Aorta (tissue), 5 donors: ENCODE measurements at regions of chr9 and their contacts with region 1.

Region 1: DNA sequence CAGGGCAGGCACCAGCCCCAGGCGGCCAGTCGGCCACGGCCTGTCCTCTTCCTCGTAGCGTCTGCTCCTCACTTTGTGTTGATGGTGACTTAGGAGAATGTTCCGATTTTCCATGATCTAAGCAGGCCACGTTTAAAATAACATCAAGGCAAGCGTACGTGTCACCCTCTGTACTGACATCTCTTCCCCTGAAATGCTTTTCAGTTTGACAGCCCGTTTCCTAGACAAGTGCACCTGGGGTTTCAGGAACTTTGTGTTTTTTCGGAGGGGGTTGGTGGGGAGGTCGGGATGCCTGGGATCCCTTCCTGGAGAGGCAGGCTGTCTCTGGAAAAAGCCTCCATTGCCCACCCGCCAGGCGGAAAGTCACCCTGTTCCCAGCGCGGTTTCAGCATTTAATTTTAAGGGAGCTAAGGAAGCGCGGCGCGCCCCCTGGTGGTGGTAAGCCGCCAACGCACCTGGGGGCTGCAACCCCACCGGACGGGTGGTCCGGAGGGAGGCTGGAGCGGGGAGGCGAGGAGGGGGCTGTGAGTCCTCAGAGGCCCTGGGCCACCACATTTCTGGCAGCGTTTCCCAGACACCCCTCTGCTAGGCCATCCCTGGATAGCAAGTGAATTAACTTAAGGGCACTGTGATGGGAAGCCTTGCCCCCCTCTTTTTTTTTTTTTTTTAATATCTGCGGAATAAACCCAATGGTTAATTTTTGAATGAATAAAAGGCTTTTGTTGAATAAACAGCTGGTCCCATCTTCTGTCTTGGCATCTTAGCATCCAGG is 29.5 kb upstream of the HMCN2 start:
- DNase-seq: peak; percentile 73 to 93
- ATAC-seq: peak; percentile 86
- H3K4me3 ChIP-seq: no peak overlapping the region
- H3K27ac ChIP-seq: no peak overlapping the region
- H3K4me1 ChIP-seq: no peaks in the 10 kb centered on the region
- H3K27me3 ChIP-seq: no peaks in the 10 kb centered on the region

Region 2: GRCh38 chr9:130107234-130107861 is 128.7 kb before region 1 on chr9:
- intact Hi-C with region 1: loop called (anchors 1 to 2 kb)
- DNase-seq: peak; percentile 88 to 94
- ATAC-seq: peak; percentile 81
- H3K4me3 ChIP-seq: no peak overlapping the region
- H3K27ac ChIP-seq: no peak overlapping the region
- H3K4me1 ChIP-seq: no peaks in the 10 kb centered on the region
- H3K27me3 ChIP-seq: no peaks in the 10 kb centered on the region

Region 3: DNA sequence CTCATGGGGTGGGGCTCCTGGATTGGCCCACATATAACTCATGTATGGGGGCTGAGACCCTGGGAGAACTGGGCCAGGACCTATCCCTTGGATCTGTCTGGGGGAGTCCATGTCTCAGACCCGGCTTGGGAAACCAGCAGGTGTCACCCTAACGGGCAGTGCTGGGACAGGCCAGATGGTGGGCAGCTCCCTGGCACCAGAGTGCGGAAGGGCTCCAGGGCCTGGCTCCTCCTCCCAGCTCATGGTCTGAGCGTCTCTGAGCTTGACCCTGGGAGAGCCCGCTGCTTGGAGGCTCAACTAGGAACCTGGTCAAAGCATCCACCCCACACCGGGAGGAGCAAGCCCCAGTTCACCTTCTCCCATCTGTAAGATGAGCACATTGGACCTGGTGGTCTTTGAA is 79.4 kb before region 1 on chr9:
- intact Hi-C with region 1: loop called (anchors 2 to 5 kb)
- DNase-seq: peak; percentile 79 to 90
- ATAC-seq: peak; percentile 72
- H3K4me3 ChIP-seq: no peak overlapping the region
- H3K27ac ChIP-seq: no peak overlapping the region
- H3K4me1 ChIP-seq: no peaks in the 10 kb centered on the region
- H3K27me3 ChIP-seq: no peaks in the 10 kb centered on the region

Region 4: DNA sequence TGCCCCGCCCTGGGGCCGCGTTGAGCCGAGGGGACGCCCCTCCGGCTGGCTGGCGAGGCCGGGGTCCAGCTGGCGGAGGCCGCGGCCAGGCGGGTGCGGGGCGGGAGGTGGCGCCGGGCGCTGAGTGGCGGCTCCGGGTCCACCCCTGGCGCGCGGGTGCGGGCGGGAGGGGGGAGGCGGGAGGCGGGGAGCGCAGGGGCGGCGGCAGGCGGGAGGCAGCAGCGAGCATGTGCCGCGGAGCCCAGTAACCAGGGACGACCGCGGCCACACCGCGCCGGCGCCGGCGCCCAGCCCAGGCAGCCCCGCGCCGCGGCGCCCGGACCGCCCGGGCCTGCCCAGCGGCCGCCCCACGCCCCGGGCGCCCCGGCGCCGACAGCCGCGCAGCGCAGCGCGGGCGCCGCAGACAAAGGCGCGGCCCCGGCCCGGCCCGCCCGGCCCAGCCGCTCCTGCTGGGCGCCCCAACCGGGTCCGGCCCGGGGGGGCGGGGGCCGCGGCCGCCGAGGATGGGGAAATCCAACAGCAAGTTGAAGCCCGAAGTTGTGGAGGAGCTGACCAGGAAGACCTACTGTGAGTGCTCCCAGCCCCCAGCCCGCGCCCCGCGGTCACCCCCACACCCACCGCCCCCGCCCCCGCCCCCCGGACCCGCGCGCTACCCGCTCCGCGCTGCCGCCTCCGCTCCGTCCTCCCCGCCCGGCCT is 63.8 kb before region 1 on chr9 and contains the start of gene NCS1:
- intact Hi-C with region 1: loop called in 1 of 2 experiments (anchors 5 kb)
- DNase-seq: peak; percentile 85 to 95
- ATAC-seq: peak; percentile 78
- H3K4me3 ChIP-seq: peak within 1 kb of the TSS; percentile 75 to 85
- H3K27ac ChIP-seq: peak within 1 kb of the TSS; percentile 15 to 86
- H3K4me1 ChIP-seq: peaks cover 0 to 5% of the 10 kb centered on the region in 2 donors
- H3K27me3 ChIP-seq: no peaks in the 10 kb centered on the region
- total RNA-seq, gene NCS1: 72.1 to 171 TPM

Region 5: GRCh38 chr9:130213903-130214761 is 22.0 kb before region 1 on chr9:
- intact Hi-C with region 1: loop called in 1 of 2 experiments (anchors 2 kb)
- DNase-seq: peak in 1 of 2 donors; percentile 52
- ATAC-seq: no peak
- H3K4me3 ChIP-seq: no peak overlapping the region
- H3K27ac ChIP-seq: no peak overlapping the region
- H3K4me1 ChIP-seq: no peaks in the 10 kb centered on the region
- H3K27me3 ChIP-seq: no peaks in the 10 kb centered on the region